GM18951 (cell line): ENCODE measurements at regions of chr14 and their contacts with region 1.

Region 1: DNA sequence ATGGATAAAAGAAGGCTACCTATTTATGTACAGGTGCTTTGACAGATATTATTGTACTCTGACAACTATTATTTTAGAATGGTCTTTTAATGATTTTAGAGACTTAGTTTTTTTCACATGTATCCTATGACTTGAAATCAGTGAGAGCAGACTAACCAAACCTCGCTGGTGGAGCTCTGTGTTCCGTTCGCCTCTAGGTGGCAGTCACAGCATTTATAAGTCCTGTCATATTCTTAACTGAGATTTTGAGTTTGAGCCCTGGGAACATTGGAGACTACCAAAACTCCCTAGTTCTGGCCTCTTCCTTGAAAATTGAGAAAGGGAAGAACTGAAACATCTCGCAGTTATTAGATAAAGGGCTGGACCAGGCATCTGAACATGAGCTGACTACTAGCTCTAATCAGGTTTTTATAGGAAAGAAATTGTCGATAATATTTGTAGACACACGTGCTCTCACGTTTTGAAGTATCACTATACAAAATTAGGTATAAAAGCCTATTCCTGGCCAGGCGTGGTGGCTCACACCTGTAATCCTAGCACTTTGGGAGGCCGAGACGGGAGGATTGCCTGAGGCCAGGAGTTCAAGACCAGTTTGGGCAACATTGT is 48.3 kb downstream of the TTLL5 start:
- POLR2A ChIP-seq: no peak

Region 2: DNA sequence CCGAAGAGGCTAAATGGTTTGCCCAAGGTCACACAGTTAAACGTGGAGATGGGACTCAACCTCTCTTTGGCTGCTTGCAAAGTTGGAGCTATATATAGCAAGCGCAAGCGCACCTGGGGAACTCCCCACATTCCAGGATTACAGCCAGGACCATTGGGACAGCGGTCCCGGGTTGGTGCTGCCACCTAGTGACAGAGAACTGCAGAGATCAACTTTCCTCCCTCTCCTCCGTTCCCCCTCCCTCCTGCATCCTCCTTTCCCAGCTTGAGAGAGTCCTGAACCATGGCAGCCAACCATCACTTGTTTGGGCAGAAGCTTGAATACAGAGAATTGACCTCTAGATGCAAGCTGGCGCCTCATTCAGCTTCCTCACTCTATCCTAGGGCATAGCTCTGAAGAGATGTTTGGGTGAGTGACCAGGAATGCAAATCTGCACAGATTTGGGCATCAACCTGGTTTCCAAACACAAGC is 148.3 kb before region 1 on chr14:
- in situ Hi-C with region 1: no loop called
- POLR2A ChIP-seq: no peak

Region 3: DNA sequence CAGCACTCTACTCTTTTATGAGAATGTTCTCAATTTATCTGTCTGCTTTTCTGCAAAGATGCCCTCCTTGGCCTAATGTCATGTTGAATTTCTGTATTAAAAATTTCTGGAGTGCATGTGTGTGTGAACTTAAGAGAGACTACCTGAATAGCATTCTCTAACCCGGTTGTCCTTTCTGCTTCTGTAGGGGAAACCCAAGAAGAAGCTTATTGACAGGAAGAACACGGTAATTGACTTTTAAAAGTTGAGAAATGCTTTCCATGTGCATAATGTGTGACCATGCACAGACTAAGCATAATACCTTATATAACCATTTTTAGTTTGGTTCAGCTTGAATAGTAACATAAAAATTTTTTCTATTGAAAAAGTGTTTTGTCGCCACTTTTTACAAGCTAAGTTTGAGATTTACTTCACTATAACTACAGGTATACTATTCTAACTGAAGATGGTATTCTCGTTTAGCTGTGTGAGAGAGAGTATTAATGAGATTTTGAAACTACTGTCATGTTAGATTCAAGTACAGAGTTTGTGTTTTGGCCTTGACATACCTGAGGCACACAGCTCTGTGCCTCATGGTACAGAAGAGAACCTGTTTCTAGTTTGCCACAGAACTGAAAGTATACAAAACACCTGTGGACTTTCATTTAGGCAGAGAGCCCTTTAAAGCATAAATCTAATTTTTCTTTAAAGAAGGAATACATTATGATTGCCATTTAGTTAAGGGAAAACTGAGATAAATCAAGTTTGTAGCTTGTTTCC is 48.5 kb after region 1 on chr14:
- in situ Hi-C with region 1: no loop called
- POLR2A ChIP-seq: no peak

Region 4: GRCh38 chr14:75871181-75871880 is 162.0 kb after region 1 on chr14:
- in situ Hi-C with region 1: no loop called
- POLR2A ChIP-seq: no peak

Region 5: GRCh38 chr14:75982266-75983018 is 273.1 kb after region 1 on chr14:
- in situ Hi-C with region 1: loop called (anchors 10 kb)
- POLR2A ChIP-seq: peak; percentile 10

Region 6: GRCh38 chr14:76352639-76353281 is 643.5 kb after region 1 on chr14:
- in situ Hi-C with region 1: loop called (anchors 25 kb)
- POLR2A ChIP-seq: no peak